CD4-positive, alpha-beta memory T cell (primary cell): ENCODE measurements at regions of chr16 and their contacts with region 1.

Region 1: DNA sequence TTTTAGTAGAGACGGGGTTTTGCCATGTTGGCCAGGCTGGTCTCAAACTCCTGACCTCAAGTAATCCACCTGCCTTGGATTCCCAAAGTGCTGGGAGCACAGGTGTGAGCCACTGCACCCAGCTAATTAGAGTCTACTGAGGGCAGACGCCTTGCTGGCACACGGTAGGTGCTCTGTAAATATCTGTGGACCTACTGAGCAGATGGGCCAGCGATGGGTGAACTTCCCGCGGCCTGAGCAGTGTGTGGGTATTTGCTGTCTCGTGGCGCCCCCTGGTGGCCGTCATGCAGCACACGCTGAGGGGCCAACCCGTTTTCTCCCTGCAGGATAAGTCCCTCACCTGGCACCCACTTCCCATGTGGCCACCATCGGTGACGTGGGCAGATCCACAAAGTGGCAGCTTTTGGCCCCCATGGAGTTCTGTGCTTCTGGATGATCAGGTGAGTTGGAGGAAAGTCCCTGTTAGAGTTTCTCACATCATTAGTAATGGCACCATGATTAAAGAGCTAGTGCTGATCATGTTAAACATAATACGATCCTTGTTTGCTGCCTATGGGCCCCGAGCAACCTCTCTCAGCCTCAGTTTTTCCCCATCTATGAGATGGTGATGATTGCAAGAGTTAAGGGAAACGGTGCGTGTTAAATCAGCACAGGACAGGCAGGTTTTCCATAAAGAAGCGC is 40.7 kb downstream of the ZDHHC7 start:
- DNase-seq: peak; percentile 72 to 81 (median 75)
- H3K4me3 ChIP-seq: no peak overlapping the region
- H3K4me3 Mint-ChIP-seq: peak overlapping the region in 3 of 8 donors; percentile 1 to 41 (median 15)
- H3K27ac ChIP-seq: no peak overlapping the region
- H3K27ac Mint-ChIP-seq: peak overlapping the region in 6 of 7 donors; percentile 22 to 74 (median 64)
- H3K4me1 ChIP-seq: peaks cover 7% of the 10 kb centered on the region
- H3K4me1 Mint-ChIP-seq: peaks cover 4 to 6% (median 5%) of the 10 kb centered on the region in 4 donors
- H3K27me3 ChIP-seq: no peaks in the 10 kb centered on the region
- H3K27me3 Mint-ChIP-seq: no peaks in the 10 kb centered on the region

Region 2: DNA sequence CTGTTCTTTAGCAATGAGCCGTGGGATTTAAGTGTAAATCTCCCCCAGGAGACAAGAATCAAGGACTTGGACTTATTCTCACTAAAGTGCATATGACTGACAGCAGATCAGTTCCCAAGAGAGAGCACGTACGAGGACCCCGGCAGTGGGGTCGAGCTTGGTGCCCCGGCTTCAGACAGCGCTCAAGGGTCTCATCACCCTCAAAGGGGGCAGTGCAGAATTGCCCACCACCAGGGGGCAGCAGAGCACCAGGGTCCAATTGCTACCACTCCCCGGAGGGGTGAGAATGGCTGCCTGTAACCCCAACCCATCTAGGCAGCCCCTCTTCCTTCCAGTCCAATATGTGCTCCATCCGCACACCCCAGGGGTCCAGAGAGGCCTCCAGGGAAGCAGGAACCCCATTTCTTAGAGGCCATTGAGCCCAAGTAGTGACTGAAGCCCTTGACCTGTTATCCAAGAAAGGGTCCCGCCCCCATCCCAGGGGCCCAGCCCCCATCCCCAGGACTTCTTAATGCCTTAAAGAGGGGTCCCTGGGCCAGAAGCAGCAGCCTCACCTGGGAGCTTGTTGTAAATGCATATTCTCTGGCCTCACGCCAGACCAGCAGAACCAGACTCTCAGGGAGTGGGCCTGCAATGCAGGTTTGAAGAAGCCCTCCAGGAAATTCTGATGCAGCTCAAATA is 45.4 kb before region 1 on chr16:
- CTCF ChIA-PET with region 1: interaction called, 37 read pairs
- POLR2A ChIA-PET with region 1: no interaction called
- intact Hi-C with region 1: loop called (anchors 1 kb)
- DNase-seq: peak; percentile 49 to 56 (median 55)
- H3K4me3 ChIP-seq: no peak overlapping the region
- H3K4me3 Mint-ChIP-seq: no peak overlapping the region
- H3K27ac ChIP-seq: no peak overlapping the region
- H3K27ac Mint-ChIP-seq: no peak overlapping the region
- H3K4me1 ChIP-seq: peaks cover 2% of the 10 kb centered on the region
- H3K4me1 Mint-ChIP-seq: peaks cover 0 to 3% (median under 1%) of the 10 kb centered on the region in 4 donors
- H3K27me3 ChIP-seq: no peaks in the 10 kb centered on the region
- H3K27me3 Mint-ChIP-seq: peaks cover 0 to 2% of the 10 kb centered on the region in 2 donors